B cell (primary cell): ENCODE measurements at regions of chr2 and their contacts with region 1.

Region 1: GRCh38 chr2:136384531-136385303 is 266.8 kb upstream of the CXCR4 start:
- DNase-seq: peak; percentile 82
- ATAC-seq: peak; percentile 50
- H3K4me3 ChIP-seq: no peak overlapping the region
- H3K4me3 Mint-ChIP-seq: peak overlapping the region; percentile 44
- H3K27ac ChIP-seq: peak overlapping the region in 1 of 2 donors; percentile 11
- H3K27ac Mint-ChIP-seq: peak overlapping the region; percentile 76
- H3K4me1 ChIP-seq: peaks cover 30 to 42% of the 10 kb centered on the region in 2 donors
- H3K4me1 Mint-ChIP-seq: peaks cover 55% of the 10 kb centered on the region
- H3K27me3 ChIP-seq: no peaks in the 10 kb centered on the region
- H3K27me3 Mint-ChIP-seq: no peaks in the 10 kb centered on the region
- CTCF ChIP-seq: peak; percentile 87

Region 2: DNA sequence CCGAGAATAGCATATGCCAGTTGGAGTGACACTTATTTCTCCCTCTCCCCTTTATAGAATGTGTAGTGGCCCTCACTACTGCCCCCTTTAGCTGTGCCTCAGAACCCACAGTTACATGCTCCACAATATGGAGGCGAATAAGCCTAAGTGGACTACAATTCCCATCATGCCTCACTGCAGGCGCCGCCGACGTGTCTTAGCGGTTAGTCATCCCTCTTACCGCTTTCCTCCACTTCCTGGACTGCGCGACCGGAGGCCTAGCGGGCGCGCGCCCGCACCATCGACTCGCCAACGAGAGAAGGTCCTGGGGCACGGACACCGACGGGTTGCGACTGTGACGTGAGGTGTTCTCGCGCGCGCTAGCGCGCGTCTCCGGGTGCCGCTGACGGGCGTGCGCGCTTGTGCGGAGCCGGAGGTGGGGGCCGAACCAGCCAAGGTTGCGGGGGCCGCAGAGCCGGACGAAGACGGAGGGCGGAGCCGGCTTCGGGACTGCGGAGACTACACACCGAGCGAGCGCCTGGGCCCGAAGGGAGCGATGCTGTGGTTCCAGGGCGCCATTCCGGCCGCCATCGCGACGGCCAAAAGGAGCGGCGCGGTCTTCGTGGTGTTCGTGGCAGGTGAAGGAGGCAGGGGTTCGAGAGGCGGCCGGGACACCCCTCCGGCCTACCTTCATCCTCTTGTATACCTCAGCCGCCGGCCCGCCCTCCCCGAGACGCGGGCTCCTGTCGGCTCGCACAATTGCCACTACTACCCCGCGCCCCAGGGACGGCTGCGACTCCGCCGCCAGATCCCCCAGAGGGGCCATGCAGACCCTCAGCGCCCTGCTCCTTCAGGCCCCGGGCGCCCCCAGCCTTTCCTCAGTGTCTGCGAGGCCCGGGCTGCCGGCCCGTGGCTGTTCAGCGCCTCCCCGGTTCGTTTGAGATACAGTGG is 643.1 kb before region 1 on chr2 and contains the start of gene UBXN4:
- CTCF ChIA-PET with region 1: interaction called, 3 read pairs
- POLR2A ChIA-PET with region 1: no interaction called
- intact Hi-C with region 1: loop called (anchors 2 kb)
- DNase-seq: peak; percentile 98
- ATAC-seq: peak; percentile 87
- H3K4me3 ChIP-seq: peak within 1 kb of the TSS; percentile 76 to 94 (median 91)
- H3K4me3 Mint-ChIP-seq: peak within 1 kb of the TSS; percentile 93
- H3K27ac ChIP-seq: peak within 1 kb of the TSS; percentile 94 to 95
- H3K27ac Mint-ChIP-seq: peak within 1 kb of the TSS; percentile 96
- H3K4me1 ChIP-seq: peaks cover 9 to 17% of the 10 kb centered on the region in 2 donors
- H3K4me1 Mint-ChIP-seq: peaks cover 38% of the 10 kb centered on the region
- H3K27me3 ChIP-seq: no peaks in the 10 kb centered on the region
- H3K27me3 Mint-ChIP-seq: no peaks in the 10 kb centered on the region
- CTCF ChIP-seq: peak; percentile 35
- total RNA-seq, gene UBXN4: 112 and 113 TPM in 2 replicates

Region 3: GRCh38 chr2:135931776-135932443 is 452.8 kb before region 1 on chr2:
- CTCF ChIA-PET with region 1: interaction called, 14 read pairs
- POLR2A ChIA-PET with region 1: no interaction called
- intact Hi-C with region 1: no loop called
- DNase-seq: no peak
- ATAC-seq: no peak
- H3K4me3 ChIP-seq: no peak overlapping the region
- H3K4me3 Mint-ChIP-seq: no peak overlapping the region
- H3K27ac ChIP-seq: no peak overlapping the region
- H3K27ac Mint-ChIP-seq: no peak overlapping the region
- H3K4me1 ChIP-seq: peaks cover 0 to 2% of the 10 kb centered on the region in 2 donors
- H3K4me1 Mint-ChIP-seq: peaks cover 14% of the 10 kb centered on the region
- H3K27me3 ChIP-seq: no peaks in the 10 kb centered on the region
- H3K27me3 Mint-ChIP-seq: no peaks in the 10 kb centered on the region
- CTCF ChIP-seq: no peak

Region 4: DNA sequence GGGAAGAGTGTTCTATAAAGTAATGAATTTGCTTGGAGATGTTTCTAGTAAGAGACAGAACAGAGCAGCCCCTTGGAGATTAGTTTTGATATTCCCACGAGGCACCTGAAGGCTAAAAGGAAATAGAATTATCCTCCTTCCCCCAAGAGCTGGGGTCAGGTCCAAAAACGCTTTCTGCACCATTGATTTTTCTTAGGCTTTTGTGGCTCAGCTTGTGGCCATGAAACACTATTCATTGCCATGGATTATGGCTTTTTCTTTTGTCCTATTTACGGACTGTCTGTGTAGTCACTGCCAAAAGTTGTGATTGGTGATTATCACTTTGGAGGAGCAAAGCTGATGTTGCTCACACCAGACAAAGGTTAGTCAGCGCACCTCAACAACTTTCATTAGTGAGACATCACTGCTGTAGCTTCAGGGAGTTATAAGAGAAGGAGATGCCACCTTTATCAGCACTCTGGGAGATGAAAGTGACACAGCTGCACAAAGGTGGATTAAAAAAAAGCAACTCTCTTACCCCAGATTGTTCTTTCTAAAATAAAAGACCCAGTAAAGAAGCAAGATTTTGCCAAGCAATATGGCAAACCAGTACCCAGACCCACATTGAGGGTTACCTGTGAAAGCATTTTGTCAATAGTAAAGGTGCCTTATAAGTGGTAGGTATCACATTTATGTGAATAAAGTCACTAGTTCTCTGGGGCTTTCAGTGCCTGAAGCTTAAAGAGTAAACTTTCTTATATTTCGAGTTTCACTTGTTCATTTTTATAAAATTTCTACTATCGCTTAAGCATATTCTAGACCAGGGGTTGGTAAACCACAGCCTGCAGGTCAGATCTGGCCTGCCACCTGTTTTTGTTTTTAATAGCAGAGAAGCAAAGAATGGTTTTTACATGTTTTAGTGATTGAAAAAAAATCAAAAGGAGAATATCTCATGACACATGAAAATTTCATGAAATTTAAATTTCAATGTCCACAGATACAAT is 277.4 kb before region 1 on chr2:
- CTCF ChIA-PET with region 1: interaction called, 17 read pairs
- POLR2A ChIA-PET with region 1: interaction called, 12 read pairs
- intact Hi-C with region 1: no loop called
- DNase-seq: peak; percentile 21
- ATAC-seq: no peak
- H3K4me3 ChIP-seq: no peak overlapping the region
- H3K4me3 Mint-ChIP-seq: peak overlapping the region; percentile 46
- H3K27ac ChIP-seq: peak overlapping the region; percentile 14 to 16
- H3K27ac Mint-ChIP-seq: peak overlapping the region; percentile 64
- H3K4me1 ChIP-seq: peaks cover 47 to 49% of the 10 kb centered on the region in 2 donors
- H3K4me1 Mint-ChIP-seq: peaks cover 57% of the 10 kb centered on the region
- H3K27me3 ChIP-seq: no peaks in the 10 kb centered on the region
- H3K27me3 Mint-ChIP-seq: no peaks in the 10 kb centered on the region
- CTCF ChIP-seq: no peak

Region 5: GRCh38 chr2:136129601-136130000 is 255.1 kb before region 1 on chr2:
- CTCF ChIA-PET with region 1: interaction called, 30 read pairs
- POLR2A ChIA-PET with region 1: interaction called, 40 read pairs
- intact Hi-C with region 1: loop called (anchors 1 kb)
- DNase-seq: peak; percentile 73
- ATAC-seq: peak; percentile 2
- H3K4me3 ChIP-seq: peak overlapping the region in 2 of 5 experiments; percentile 4 to 11
- H3K4me3 Mint-ChIP-seq: peak overlapping the region; percentile 83
- H3K27ac ChIP-seq: peak overlapping the region; percentile 98 to 99
- H3K27ac Mint-ChIP-seq: peak overlapping the region; percentile 96
- H3K4me1 ChIP-seq: peaks cover 96 to 98% of the 10 kb centered on the region in 2 donors
- H3K4me1 Mint-ChIP-seq: peaks cover 94% of the 10 kb centered on the region
- H3K27me3 ChIP-seq: no peaks in the 10 kb centered on the region
- H3K27me3 Mint-ChIP-seq: no peaks in the 10 kb centered on the region
- CTCF ChIP-seq: no peak

Region 6: GRCh38 chr2:136225950-136226835 is 158.5 kb before region 1 on chr2:
- CTCF ChIA-PET with region 1: interaction called, 9 read pairs
- POLR2A ChIA-PET with region 1: interaction called, 11 read pairs
- intact Hi-C with region 1: loop called (anchors 1 kb)
- DNase-seq: peak; percentile 88
- ATAC-seq: peak; percentile 84
- H3K4me3 ChIP-seq: no peak overlapping the region
- H3K4me3 Mint-ChIP-seq: peak overlapping the region; percentile 42
- H3K27ac ChIP-seq: peak overlapping the region; percentile 62 to 75
- H3K27ac Mint-ChIP-seq: peak overlapping the region; percentile 95
- H3K4me1 ChIP-seq: peaks cover 46 to 54% of the 10 kb centered on the region in 2 donors
- H3K4me1 Mint-ChIP-seq: peaks cover 75% of the 10 kb centered on the region
- H3K27me3 ChIP-seq: no peaks in the 10 kb centered on the region
- H3K27me3 Mint-ChIP-seq: no peaks in the 10 kb centered on the region
- CTCF ChIP-seq: no peak

Region 7: GRCh38 chr2:136423516-136423996 is 38.8 kb after region 1 on chr2:
- CTCF ChIA-PET with region 1: interaction called, 22 read pairs
- POLR2A ChIA-PET with region 1: no interaction called
- intact Hi-C with region 1: loop called (anchors 2 kb)
- DNase-seq: peak; percentile 86
- ATAC-seq: peak; percentile 100
- H3K4me3 ChIP-seq: peak overlapping the region; percentile 42 to 92 (median 57)
- H3K4me3 Mint-ChIP-seq: peak overlapping the region; percentile 84
- H3K27ac ChIP-seq: no peak overlapping the region
- H3K27ac Mint-ChIP-seq: peak overlapping the region; percentile 28
- H3K4me1 ChIP-seq: peaks cover 10% of the 10 kb centered on the region in 2 donors
- H3K4me1 Mint-ChIP-seq: peaks cover 13% of the 10 kb centered on the region
- H3K27me3 ChIP-seq: peaks cover 0 to 20% (median 4%) of the 10 kb centered on the region in 4 experiments
- H3K27me3 Mint-ChIP-seq: peaks cover 39% of the 10 kb centered on the region
- CTCF ChIP-seq: peak; percentile 86